Naive thymus-derived CD8-positive, alpha-beta T cell (primary cell): ENCODE measurements at regions of chr15 and their contacts with region 1.

Region 1: DNA sequence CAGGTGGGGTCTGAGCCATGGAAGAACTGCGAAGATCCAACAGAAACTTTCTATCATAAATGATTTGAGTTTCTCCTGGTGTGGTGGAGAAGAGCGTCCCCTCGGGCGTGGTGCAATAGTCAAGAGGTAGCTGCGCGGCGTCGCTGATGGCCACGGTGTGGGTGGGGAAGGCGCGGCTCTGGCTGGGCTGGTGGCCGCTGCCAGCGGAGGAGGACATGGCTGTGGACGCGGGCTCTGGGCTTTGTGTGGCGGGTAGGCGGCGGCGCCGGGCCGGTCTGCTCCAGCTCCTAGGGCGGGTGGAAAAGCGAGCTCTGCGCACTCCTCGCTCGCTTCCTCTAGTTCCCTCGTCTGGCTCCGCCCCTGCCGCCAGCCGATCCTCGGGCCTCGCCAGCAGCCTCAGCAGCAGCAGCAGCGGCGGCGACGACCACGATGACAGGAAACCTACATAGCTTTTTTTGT is 5.9 kb downstream of the STARD9 start:
- DNase-seq: peak; percentile 69 to 88 (median 76)
- ATAC-seq: peak; percentile 99
- H3K4me3 Mint-ChIP-seq: peak overlapping the region; percentile 82 to 97 (median 92)
- H3K27ac Mint-ChIP-seq: peak overlapping the region; percentile 91 to 99 (median 96)
- H3K4me1 Mint-ChIP-seq: peaks cover 21 to 59% (median 55%) of the 10 kb centered on the region in 4 donors
- H3K27me3 Mint-ChIP-seq: peaks cover 0 to 9% (median 0%) of the 10 kb centered on the region in 5 donors

Region 2: GRCh38 chr15:42548253-42549031 is 32.9 kb before region 1 on chr15 and contains the starts of genes HAUS2 and LRRC57:
- POLR2A ChIA-PET with region 1: interaction called, 25 read pairs
- DNase-seq: peak; percentile 79 to 91 (median 86)
- ATAC-seq: peak; percentile 84 to 94
- H3K4me3 Mint-ChIP-seq: peak within 1 kb of the TSS; percentile 92 to 99 (median 95)
- H3K27ac Mint-ChIP-seq: peak within 1 kb of the TSS; percentile 93 to 99 (median 98)
- H3K4me1 Mint-ChIP-seq: peaks cover 26 to 60% (median 50%) of the 10 kb centered on the region in 4 donors
- H3K27me3 Mint-ChIP-seq: no peaks in the 10 kb centered on the region
- polyA plus RNA-seq, gene HAUS2: 20.8 to 25.4 (median 24.9) TPM
- polyA plus RNA-seq, gene LRRC57: 3.3 to 6.4 (median 5.5) TPM

Region 3: GRCh38 chr15:42553554-42553953 is 27.7 kb before region 1 on chr15:
- POLR2A ChIA-PET with region 1: interaction called, 25 read pairs
- DNase-seq: no peak
- ATAC-seq: no peak
- H3K4me3 Mint-ChIP-seq: no peak overlapping the region
- H3K27ac Mint-ChIP-seq: peak overlapping the region in 5 of 10 donors; percentile 2 to 35 (median 11)
- H3K4me1 Mint-ChIP-seq: peaks cover 12 to 45% (median 33%) of the 10 kb centered on the region in 4 donors
- H3K27me3 Mint-ChIP-seq: no peaks in the 10 kb centered on the region

Region 4: DNA sequence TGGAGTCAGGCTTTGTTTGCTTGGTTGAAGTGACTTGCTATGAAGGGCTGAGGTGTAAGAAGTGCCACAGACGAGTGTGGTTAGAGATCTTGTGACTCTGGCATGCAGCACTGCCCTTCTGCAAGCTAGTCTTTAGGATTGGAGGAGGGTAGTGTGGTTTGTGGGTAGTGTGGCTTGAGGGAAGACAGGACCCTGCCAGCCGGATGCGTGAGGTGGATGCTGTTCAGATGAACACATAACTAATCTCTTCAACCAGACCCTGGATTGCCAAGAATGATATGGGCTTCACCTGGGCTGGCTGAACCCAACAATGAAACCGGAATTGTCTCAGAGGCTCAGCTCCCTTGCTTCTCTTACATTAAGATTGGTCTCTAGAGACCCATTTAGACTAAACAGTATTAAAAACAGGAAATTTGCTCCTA is 26.8 kb after region 1 on chr15:
- POLR2A ChIA-PET with region 1: interaction called, 26 read pairs
- DNase-seq: peak; percentile 8 to 64 (median 41)
- ATAC-seq: peak; percentile 75 to 76
- H3K4me3 Mint-ChIP-seq: peak overlapping the region; percentile 61 to 79 (median 71)
- H3K27ac Mint-ChIP-seq: peak overlapping the region; percentile 24 to 91 (median 82)
- H3K4me1 Mint-ChIP-seq: peaks cover 25 to 63% (median 55%) of the 10 kb centered on the region in 4 donors
- H3K27me3 Mint-ChIP-seq: no peaks in the 10 kb centered on the region

Region 5: GRCh38 chr15:42749266-42749665 is 168.0 kb after region 1 on chr15:
- POLR2A ChIA-PET with region 1: no interaction called
- DNase-seq: no peak
- ATAC-seq: no peak
- H3K4me3 Mint-ChIP-seq: no peak overlapping the region
- H3K27ac Mint-ChIP-seq: no peak overlapping the region
- H3K4me1 Mint-ChIP-seq: peaks cover 0 to 3% (median 0%) of the 10 kb centered on the region in 4 donors
- H3K27me3 Mint-ChIP-seq: no peaks in the 10 kb centered on the region